CD4-positive, alpha-beta T cell (primary cell): ENCODE measurements at regions of chr19 and their contacts with region 1.

Region 1: DNA sequence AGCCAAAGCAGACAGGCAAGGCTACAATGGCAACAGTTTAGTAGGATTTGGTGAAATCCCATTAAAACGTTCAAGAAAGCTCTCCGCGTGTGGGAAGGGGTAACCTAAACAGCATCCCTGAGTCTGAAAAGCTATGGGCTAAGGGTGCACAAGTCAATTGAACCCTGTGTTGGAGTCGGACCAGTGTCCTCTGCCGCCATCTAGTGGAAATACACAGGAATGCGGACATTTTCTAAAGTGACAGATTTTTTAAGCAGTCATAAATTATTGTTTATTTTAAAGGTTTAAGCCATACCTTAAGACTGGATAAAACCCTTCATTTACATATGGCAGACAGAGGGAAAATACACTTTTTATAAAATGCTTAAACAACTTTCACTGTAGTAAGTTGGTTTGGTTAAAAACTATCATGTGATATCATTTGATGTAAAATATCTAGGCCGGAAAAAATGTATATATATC is 26.5 kb upstream of the LSM14A start:
- DNase-seq: peak; percentile 23 to 80 (median 40)
- ATAC-seq: peak; percentile 78
- H3K4me3 ChIP-seq: no peak overlapping the region
- H3K4me3 Mint-ChIP-seq: no peak overlapping the region
- H3K27ac ChIP-seq: no peak overlapping the region
- H3K27ac Mint-ChIP-seq: no peak overlapping the region
- H3K4me1 ChIP-seq: no peaks in the 10 kb centered on the region
- H3K4me1 Mint-ChIP-seq: no peaks in the 10 kb centered on the region
- H3K27me3 ChIP-seq: no peaks in the 10 kb centered on the region
- H3K27me3 Mint-ChIP-seq: no peaks in the 10 kb centered on the region
- CTCF ChIP-seq: peak; percentile 91

Region 2: GRCh38 chr19:33795370-33796163 is 350.2 kb before region 1 on chr19:
- CTCF ChIA-PET with region 1: no interaction called
- POLR2A ChIA-PET with region 1: no interaction called
- intact Hi-C with region 1: loop called in 1 of 2 experiments (anchors 5 kb)
- DNase-seq: peak in 7 of 14 experiments; percentile 23 to 67 (median 33)
- ATAC-seq: peak; percentile 44
- H3K4me3 ChIP-seq: peak overlapping the region; percentile 44
- H3K4me3 Mint-ChIP-seq: peak overlapping the region; percentile 71
- H3K27ac ChIP-seq: no peak overlapping the region
- H3K27ac Mint-ChIP-seq: no peak overlapping the region
- H3K4me1 ChIP-seq: peaks cover 31% of the 10 kb centered on the region
- H3K4me1 Mint-ChIP-seq: no peaks in the 10 kb centered on the region
- H3K27me3 ChIP-seq: peaks cover 19 to 37% of the 10 kb centered on the region in 2 experiments
- H3K27me3 Mint-ChIP-seq: peaks cover 50% of the 10 kb centered on the region
- CTCF ChIP-seq: peak; percentile 39

Region 3: GRCh38 chr19:34041925-34042521 is 103.7 kb before region 1 on chr19:
- CTCF ChIA-PET with region 1: interaction called, 9 read pairs
- POLR2A ChIA-PET with region 1: no interaction called
- intact Hi-C with region 1: loop called in 1 of 2 experiments (anchors 1 kb)
- DNase-seq: peak; percentile 51 to 79 (median 60)
- ATAC-seq: no peak
- H3K4me3 ChIP-seq: no peak overlapping the region
- H3K4me3 Mint-ChIP-seq: no peak overlapping the region
- H3K27ac ChIP-seq: no peak overlapping the region
- H3K27ac Mint-ChIP-seq: no peak overlapping the region
- H3K4me1 ChIP-seq: no peaks in the 10 kb centered on the region
- H3K4me1 Mint-ChIP-seq: no peaks in the 10 kb centered on the region
- H3K27me3 ChIP-seq: peaks cover 0 to 2% of the 10 kb centered on the region in 2 experiments
- H3K27me3 Mint-ChIP-seq: peaks cover 34% of the 10 kb centered on the region
- CTCF ChIP-seq: peak; percentile 83

Region 4: GRCh38 chr19:34104096-34104495 is 41.7 kb before region 1 on chr19:
- CTCF ChIA-PET with region 1: no interaction called
- POLR2A ChIA-PET with region 1: no interaction called
- intact Hi-C with region 1: no loop called
- DNase-seq: no peak
- ATAC-seq: no peak
- H3K4me3 ChIP-seq: no peak overlapping the region
- H3K4me3 Mint-ChIP-seq: no peak overlapping the region
- H3K27ac ChIP-seq: no peak overlapping the region
- H3K27ac Mint-ChIP-seq: no peak overlapping the region
- H3K4me1 ChIP-seq: no peaks in the 10 kb centered on the region
- H3K4me1 Mint-ChIP-seq: no peaks in the 10 kb centered on the region
- H3K27me3 ChIP-seq: peaks cover 0 to 6% of the 10 kb centered on the region in 2 experiments
- H3K27me3 Mint-ChIP-seq: peaks cover 20% of the 10 kb centered on the region
- CTCF ChIP-seq: no peak

Region 5: GRCh38 chr19:34120846-34121639 is 24.7 kb before region 1 on chr19:
- CTCF ChIA-PET with region 1: interaction called, 10 read pairs
- POLR2A ChIA-PET with region 1: no interaction called
- intact Hi-C with region 1: loop called (anchors 1 kb)
- DNase-seq: peak; percentile 23 to 74 (median 50)
- ATAC-seq: peak; percentile 73
- H3K4me3 ChIP-seq: no peak overlapping the region
- H3K4me3 Mint-ChIP-seq: no peak overlapping the region
- H3K27ac ChIP-seq: no peak overlapping the region
- H3K27ac Mint-ChIP-seq: peak overlapping the region; percentile 4
- H3K4me1 ChIP-seq: no peaks in the 10 kb centered on the region
- H3K4me1 Mint-ChIP-seq: peaks cover 21% of the 10 kb centered on the region
- H3K27me3 ChIP-seq: no peaks in the 10 kb centered on the region
- H3K27me3 Mint-ChIP-seq: peaks cover 4% of the 10 kb centered on the region
- CTCF ChIP-seq: peak; percentile 80

Region 6: GRCh38 chr19:34184880-34185491 is 39.2 kb after region 1 on chr19:
- CTCF ChIA-PET with region 1: no interaction called
- POLR2A ChIA-PET with region 1: no interaction called
- intact Hi-C with region 1: no loop called
- DNase-seq: peak in 3 of 14 experiments; percentile 19 to 37 (median 35)
- ATAC-seq: peak; percentile 48
- H3K4me3 ChIP-seq: no peak overlapping the region
- H3K4me3 Mint-ChIP-seq: peak overlapping the region; percentile 65
- H3K27ac ChIP-seq: no peak overlapping the region
- H3K27ac Mint-ChIP-seq: peak overlapping the region; percentile 55
- H3K4me1 ChIP-seq: peaks cover 45% of the 10 kb centered on the region
- H3K4me1 Mint-ChIP-seq: peaks cover 90% of the 10 kb centered on the region
- H3K27me3 ChIP-seq: no peaks in the 10 kb centered on the region
- H3K27me3 Mint-ChIP-seq: no peaks in the 10 kb centered on the region
- CTCF ChIP-seq: no peak

Region 7: DNA sequence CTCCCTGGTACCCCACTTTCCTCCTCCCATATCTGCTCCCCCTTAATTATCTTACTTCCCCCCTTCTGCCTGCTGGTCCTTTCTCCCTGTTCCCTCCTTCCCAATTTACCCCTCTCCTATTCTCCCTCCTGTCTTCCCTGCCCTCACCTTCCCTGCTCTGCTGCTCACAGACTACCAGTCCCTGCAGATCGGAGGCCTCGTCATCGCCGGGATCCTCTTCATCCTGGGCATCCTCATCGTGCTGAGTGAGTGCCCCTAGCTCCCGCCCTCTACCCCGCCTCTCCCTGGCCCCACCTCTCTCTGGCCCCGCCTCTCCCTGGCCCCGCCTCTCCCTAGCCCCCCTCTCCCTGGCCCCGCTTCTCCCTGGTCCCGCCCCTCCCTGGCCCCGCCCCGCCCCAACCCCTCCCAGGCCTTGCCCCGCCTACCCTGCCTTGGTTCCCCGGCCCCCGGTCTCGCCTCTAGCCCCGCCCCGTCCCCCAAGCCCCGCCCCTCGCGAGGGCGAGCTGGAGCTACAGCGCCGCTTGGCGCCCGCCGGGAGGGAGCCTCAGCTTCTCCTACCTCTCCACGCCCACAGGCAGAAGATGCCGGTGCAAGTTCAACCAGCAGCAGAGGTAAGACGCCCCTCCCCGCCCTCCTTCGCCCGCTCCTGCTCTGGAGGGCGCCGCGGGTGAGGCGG is 995.3 kb after region 1 on chr19:
- CTCF ChIA-PET with region 1: no interaction called
- POLR2A ChIA-PET with region 1: no interaction called
- intact Hi-C with region 1: no loop called
- DNase-seq: peak; percentile 91 to 99 (median 96)
- ATAC-seq: peak; percentile 87
- H3K4me3 ChIP-seq: peak overlapping the region; percentile 42
- H3K4me3 Mint-ChIP-seq: peak overlapping the region; percentile 90
- H3K27ac ChIP-seq: no peak overlapping the region
- H3K27ac Mint-ChIP-seq: peak overlapping the region; percentile 79
- H3K4me1 ChIP-seq: peaks cover 54% of the 10 kb centered on the region
- H3K4me1 Mint-ChIP-seq: peaks cover 43% of the 10 kb centered on the region
- H3K27me3 ChIP-seq: no peaks in the 10 kb centered on the region
- H3K27me3 Mint-ChIP-seq: no peaks in the 10 kb centered on the region
- CTCF ChIP-seq: no peak